ENCODE measurements at regions of chr14 and their contacts with region 1.

Region 1: DNA sequence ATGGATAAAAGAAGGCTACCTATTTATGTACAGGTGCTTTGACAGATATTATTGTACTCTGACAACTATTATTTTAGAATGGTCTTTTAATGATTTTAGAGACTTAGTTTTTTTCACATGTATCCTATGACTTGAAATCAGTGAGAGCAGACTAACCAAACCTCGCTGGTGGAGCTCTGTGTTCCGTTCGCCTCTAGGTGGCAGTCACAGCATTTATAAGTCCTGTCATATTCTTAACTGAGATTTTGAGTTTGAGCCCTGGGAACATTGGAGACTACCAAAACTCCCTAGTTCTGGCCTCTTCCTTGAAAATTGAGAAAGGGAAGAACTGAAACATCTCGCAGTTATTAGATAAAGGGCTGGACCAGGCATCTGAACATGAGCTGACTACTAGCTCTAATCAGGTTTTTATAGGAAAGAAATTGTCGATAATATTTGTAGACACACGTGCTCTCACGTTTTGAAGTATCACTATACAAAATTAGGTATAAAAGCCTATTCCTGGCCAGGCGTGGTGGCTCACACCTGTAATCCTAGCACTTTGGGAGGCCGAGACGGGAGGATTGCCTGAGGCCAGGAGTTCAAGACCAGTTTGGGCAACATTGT is 48.3 kb downstream of the TTLL5 start:
- DNase-seq: peak; percentile 63
- H3K4me3 ChIP-seq: no peak overlapping the region
- H3K27ac ChIP-seq: no peak overlapping the region
- H3K27me3 ChIP-seq: no peaks in the 10 kb centered on the region
- CTCF ChIP-seq: peak; percentile 80

Region 2: DNA sequence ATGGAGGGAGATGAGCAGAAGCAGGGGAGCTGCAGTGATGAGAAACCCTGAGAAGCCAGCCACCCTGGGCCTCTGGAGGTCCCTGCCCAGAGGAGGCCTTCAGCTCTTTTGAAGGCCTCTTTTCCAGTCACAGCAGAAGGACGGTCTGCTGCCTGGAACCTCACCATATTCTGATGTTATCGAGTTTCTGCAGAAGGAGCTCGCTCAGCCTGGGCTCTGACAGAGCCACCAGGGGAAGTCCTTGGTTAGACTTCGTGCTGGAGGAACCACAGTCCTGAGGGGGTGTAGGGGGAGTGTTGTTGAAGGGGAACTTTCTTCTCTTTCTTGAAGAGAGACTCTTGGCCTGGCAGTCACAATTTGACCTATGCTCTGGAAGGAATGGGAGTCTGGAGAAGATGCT is 212.1 kb before region 1 on chr14:
- CTCF ChIA-PET with region 1: no interaction called
- POLR2A ChIA-PET with region 1: no interaction called
- DNase-seq: no peak
- H3K4me3 ChIP-seq: no peak overlapping the region
- H3K27ac ChIP-seq: no peak overlapping the region
- H3K27me3 ChIP-seq: peaks cover 6% of the 10 kb centered on the region
- CTCF ChIP-seq: no peak

Region 3: DNA sequence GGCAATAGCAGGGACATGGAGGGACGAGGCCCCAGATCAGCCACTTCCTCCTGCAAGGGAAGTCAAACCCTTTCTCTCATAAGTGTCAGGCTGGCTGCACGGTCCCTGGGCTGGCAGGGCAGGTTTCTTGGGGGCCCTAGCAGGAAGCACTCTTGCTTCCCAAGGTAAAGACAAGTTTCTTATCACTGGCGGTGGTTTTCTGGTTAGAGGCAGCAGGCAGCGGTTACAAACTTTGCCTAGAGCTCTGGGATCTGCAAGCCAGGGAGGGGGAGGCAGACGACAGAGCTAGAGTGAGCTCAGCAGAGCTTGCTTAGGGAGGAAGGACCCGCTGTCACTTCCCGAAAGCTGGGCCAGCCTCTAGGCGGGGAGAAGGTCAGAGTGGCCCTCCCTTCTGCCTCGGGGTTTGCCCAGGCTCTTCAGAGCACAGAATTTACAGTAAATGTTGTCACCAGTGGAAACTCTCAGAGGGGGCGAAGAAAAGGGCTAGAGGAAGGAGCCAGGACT is 166.7 kb before region 1 on chr14:
- CTCF ChIA-PET with region 1: no interaction called
- POLR2A ChIA-PET with region 1: no interaction called
- DNase-seq: no peak
- H3K4me3 ChIP-seq: no peak overlapping the region
- H3K27ac ChIP-seq: no peak overlapping the region
- H3K27me3 ChIP-seq: peaks cover 5% of the 10 kb centered on the region
- CTCF ChIP-seq: no peak

Region 4: DNA sequence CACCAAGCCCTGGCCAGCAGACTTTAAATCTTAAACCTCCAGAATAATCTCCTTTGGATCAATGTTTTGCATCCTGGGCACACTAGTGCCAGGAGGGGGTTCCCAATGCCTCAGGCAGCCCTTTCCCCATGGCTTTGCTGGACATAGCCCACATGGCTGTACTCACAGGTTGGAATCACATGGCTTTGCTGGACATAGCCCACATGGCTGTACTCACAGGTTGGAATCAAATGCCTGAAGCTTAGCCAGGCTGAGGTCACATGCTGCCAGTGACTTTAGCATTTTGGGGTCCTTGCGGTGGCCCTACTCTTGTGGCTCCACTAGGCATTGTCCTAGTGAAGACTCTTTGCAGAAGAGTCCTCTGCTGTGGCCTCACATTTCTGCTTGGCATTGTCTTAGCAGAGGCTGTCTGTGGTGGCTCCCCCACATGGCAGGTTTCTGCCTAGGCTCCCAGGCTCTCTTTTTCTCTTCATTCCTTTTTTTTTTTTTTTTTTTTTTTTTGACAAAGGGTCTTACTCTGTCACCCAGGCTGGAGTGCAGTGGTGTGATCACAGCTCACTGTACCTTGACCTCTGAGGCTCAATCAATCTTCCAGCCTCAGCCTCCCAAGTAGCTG is 117.9 kb before region 1 on chr14:
- CTCF ChIA-PET with region 1: no interaction called
- POLR2A ChIA-PET with region 1: no interaction called
- DNase-seq: no peak
- H3K4me3 ChIP-seq: no peak overlapping the region
- H3K27ac ChIP-seq: no peak overlapping the region
- H3K27me3 ChIP-seq: peaks cover 18% of the 10 kb centered on the region
- CTCF ChIP-seq: no peak

Region 5: DNA sequence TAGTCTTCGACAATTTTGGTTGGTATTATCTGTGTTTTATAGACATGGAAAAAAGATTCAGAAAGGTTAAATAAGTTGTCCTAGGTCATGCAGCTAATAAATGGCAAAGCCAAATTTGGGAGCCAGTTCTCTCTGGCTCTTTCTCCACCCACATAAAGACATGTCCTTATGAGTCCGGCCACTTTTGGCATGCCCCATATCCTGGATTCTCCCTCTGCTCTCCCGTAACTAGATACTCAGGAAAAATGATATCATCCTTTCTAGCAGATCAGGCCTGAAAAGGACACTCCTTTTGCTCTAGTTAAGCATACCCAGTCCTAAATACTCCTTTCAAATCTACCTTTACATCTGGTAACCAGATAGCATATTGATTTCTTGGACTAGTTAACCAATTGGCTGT is 16.2 kb after region 1 on chr14:
- CTCF ChIA-PET with region 1: interaction called, 16 read pairs
- POLR2A ChIA-PET with region 1: no interaction called
- DNase-seq: no peak
- H3K4me3 ChIP-seq: no peak overlapping the region
- H3K27ac ChIP-seq: no peak overlapping the region
- H3K27me3 ChIP-seq: no peaks in the 10 kb centered on the region
- CTCF ChIP-seq: no peak

Region 6: GRCh38 chr14:75771595-75771994 is 62.3 kb after region 1 on chr14:
- CTCF ChIA-PET with region 1: interaction called, 22 read pairs
- POLR2A ChIA-PET with region 1: no interaction called
- DNase-seq: no peak
- H3K4me3 ChIP-seq: no peak overlapping the region
- H3K27ac ChIP-seq: no peak overlapping the region
- H3K27me3 ChIP-seq: no peaks in the 10 kb centered on the region
- CTCF ChIP-seq: no peak

Region 7: GRCh38 chr14:75829316-75829715 is 120.0 kb after region 1 on chr14:
- CTCF ChIA-PET with region 1: interaction called, 10 read pairs
- POLR2A ChIA-PET with region 1: no interaction called
- DNase-seq: no peak
- H3K4me3 ChIP-seq: no peak overlapping the region
- H3K27ac ChIP-seq: no peak overlapping the region
- H3K27me3 ChIP-seq: no peaks in the 10 kb centered on the region
- CTCF ChIP-seq: no peak

Region 8: DNA sequence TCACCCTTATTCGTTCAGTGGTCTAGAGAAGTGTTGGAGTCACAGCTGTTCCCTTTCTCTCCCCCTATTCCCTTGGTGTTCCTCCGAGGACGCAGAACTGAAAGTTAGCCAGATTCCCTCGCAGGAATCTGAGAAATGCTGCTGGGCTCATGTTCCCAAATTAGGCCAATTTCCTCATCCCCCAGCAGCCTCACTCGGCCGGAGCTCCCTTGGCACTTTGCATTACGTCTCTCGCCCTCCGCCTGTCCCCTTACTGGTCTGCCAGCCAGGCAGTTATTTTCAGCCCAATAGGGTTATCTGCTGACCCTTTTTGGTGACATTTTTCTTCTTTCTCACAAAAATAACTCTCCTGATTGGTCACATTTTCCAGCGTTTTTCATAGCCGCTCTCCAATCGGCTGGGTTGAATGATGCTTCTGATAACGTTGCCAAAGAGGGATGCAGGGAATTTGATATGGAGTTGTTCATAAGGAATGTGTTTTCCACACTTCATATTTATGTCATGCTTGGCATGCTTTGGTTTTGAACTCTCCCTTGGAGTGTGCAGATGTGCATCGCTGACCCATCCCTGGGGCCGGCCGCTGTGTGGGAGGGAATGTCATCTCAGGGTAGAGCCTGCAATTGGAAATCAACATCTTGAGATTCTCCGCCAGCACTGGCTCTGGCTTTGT is 286.2 kb after region 1 on chr14:
- CTCF ChIA-PET with region 1: interaction called, 484 read pairs
- POLR2A ChIA-PET with region 1: no interaction called
- DNase-seq: peak; percentile 80
- H3K4me3 ChIP-seq: peak overlapping the region; percentile 34
- H3K27ac ChIP-seq: peak overlapping the region; percentile 92
- H3K27me3 ChIP-seq: no peaks in the 10 kb centered on the region
- CTCF ChIP-seq: no peak

Region 9: DNA sequence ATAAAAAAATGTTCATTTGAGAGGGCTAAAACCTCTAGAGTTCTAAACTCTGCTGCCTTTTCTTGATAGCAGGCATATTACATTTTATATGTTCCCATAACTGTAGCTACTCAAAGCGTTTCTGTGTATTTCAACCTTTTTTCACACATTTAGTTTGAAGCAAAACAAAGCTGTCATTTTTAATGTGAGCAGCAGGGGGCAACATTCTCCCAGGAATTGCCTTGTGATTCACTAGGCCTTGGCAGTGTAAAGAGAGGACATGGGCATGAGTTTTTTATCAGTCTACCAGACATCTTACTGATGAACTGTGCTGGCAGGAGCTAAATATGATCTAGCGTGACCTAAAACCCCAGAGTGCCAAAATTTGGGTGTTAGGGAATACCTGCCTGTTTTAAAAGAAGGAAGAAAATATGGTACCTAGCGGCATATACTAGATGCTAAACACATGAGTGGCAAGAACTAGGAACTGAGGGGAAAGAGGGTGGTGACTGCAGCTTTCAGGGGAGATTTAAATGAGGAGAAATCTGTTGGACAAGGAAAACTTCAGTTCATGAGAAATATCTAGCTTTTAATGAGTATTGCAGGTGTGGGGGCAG is 341.6 kb after region 1 on chr14:
- CTCF ChIA-PET with region 1: interaction called, 74 read pairs
- POLR2A ChIA-PET with region 1: no interaction called
- DNase-seq: peak; percentile 21
- H3K4me3 ChIP-seq: no peak overlapping the region
- H3K27ac ChIP-seq: no peak overlapping the region
- H3K27me3 ChIP-seq: no peaks in the 10 kb centered on the region
- CTCF ChIP-seq: peak; percentile 80

Region 10: GRCh38 chr14:76386915-76387782 is 677.8 kb after region 1 on chr14:
- CTCF ChIA-PET with region 1: interaction called, 43 read pairs
- POLR2A ChIA-PET with region 1: no interaction called
- DNase-seq: peak; percentile 11
- H3K4me3 ChIP-seq: no peak overlapping the region
- H3K27ac ChIP-seq: no peak overlapping the region
- H3K27me3 ChIP-seq: peaks cover 18% of the 10 kb centered on the region
- CTCF ChIP-seq: peak; percentile 99

Measured in AG04450 (cell line).